Aorta (tissue), 5 donors: ENCODE measurements at regions of chr7 and their contacts with region 1.

Region 1: DNA sequence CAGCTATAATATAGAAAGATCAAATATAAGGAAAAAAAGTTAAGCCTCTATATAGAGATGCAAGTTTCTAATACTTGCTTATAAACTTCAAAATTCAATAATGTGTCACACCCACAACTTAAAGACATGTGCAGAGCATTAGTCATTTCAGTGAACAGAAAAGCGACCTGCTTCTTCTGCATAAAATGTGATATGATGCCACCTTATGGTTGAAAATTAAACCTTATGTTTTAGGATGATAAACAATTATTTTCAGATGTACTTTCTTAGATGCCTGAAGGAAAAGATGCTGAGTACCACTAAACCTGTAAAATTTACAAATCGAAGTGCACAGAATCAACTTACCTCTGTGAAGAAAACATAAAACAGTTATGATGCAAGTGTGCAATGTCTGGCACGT is 96.0 kb downstream of the MTERF1 start:
- DNase-seq: no peak
- ATAC-seq: no peak
- H3K4me3 ChIP-seq: no peak overlapping the region
- H3K27ac ChIP-seq: no peak overlapping the region
- H3K4me1 ChIP-seq: no peaks in the 10 kb centered on the region
- H3K27me3 ChIP-seq: no peaks in the 10 kb centered on the region

Region 2: GRCh38 chr7:91046322-91047089 is 738.0 kb before region 1 on chr7:
- intact Hi-C with region 1: loop called in 1 of 2 experiments (anchors 10 kb)
- DNase-seq: no peak
- ATAC-seq: peak; percentile 53
- H3K4me3 ChIP-seq: no peak overlapping the region
- H3K27ac ChIP-seq: no peak overlapping the region
- H3K4me1 ChIP-seq: peaks cover 3% of the 10 kb centered on the region in 2 donors
- H3K27me3 ChIP-seq: no peaks in the 10 kb centered on the region

Region 3: DNA sequence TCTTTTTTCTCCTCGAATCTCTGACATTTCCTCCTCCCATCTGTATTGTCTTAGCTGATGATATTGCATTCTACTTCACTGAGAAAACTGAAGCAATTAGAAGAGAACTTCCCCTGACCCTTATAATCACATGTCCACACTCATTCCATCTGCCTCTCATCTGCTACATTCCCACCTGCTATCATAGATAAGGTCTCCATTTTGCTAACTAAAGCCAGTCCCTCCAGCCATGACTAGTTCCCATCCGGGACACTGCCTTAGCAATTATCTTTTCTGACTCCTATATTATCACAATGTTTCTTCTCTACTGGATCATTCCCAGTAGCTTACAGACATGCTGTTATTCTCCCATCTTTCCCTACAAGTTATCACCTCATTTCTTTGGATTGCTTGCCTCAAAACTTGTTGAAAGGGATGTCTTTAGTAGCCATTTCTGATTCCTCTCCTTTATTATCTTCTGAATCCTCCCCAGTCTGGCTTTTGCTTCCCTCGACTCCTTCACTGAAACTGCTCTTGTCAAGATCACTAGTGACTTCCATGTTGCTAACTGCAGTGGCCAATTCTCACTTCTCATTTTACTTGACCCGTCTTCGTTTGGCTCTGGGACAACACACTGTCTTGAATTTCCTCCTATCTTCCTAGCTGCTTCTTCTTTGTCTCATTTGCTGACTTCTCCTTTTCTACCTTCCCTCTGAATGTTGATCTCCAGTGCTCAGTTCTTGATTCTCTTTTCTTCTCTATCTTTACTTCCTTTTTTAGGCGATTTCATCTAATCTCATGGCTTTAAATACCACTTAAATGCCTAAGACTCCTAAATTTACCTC is 484.3 kb before region 1 on chr7:
- intact Hi-C with region 1: no loop called
- DNase-seq: no peak
- ATAC-seq: no peak
- H3K4me3 ChIP-seq: no peak overlapping the region
- H3K27ac ChIP-seq: no peak overlapping the region
- H3K4me1 ChIP-seq: no peaks in the 10 kb centered on the region
- H3K27me3 ChIP-seq: peaks cover 0 to 2% of the 10 kb centered on the region in 2 donors

Region 4: GRCh38 chr7:91731976-91732375 is 52.5 kb before region 1 on chr7:
- intact Hi-C with region 1: no loop called
- DNase-seq: no peak
- ATAC-seq: no peak
- H3K4me3 ChIP-seq: no peak overlapping the region
- H3K27ac ChIP-seq: no peak overlapping the region
- H3K4me1 ChIP-seq: no peaks in the 10 kb centered on the region
- H3K27me3 ChIP-seq: no peaks in the 10 kb centered on the region

Region 5: DNA sequence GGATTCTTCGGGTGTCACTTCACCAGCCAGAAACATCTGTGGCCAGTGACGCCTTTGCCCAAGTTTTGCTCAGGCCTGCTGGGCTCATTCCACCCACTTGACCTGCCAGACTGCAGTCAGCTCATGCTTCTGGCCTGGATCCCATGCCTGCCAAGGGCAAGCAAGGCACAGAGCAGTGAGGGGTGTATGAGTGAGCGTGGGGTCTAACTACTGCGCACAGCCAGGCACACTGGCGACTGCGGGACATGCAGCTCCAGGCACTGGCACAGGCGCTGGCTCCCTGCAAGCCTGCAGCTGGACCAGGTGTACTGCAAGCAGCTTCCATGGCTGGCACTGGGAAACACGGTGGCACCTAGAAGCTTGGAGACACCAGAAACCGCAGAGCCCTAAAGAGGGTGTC is 15.9 kb after region 1 on chr7:
- intact Hi-C with region 1: no loop called
- DNase-seq: no peak
- ATAC-seq: peak; percentile 30
- H3K4me3 ChIP-seq: no peak overlapping the region
- H3K27ac ChIP-seq: no peak overlapping the region
- H3K4me1 ChIP-seq: no peaks in the 10 kb centered on the region
- H3K27me3 ChIP-seq: no peaks in the 10 kb centered on the region

Region 6: GRCh38 chr7:92020636-92021035 is 236.2 kb after region 1 on chr7:
- intact Hi-C with region 1: no loop called
- DNase-seq: no peak
- ATAC-seq: no peak
- H3K4me3 ChIP-seq: no peak overlapping the region
- H3K27ac ChIP-seq: no peak overlapping the region
- H3K4me1 ChIP-seq: peaks cover 0 to 3% of the 10 kb centered on the region in 2 donors
- H3K27me3 ChIP-seq: no peaks in the 10 kb centered on the region